Naive thymus-derived CD4-positive, alpha-beta T cell (primary cell): ENCODE measurements at regions of chr7 and their contacts with region 1.

Region 1: DNA sequence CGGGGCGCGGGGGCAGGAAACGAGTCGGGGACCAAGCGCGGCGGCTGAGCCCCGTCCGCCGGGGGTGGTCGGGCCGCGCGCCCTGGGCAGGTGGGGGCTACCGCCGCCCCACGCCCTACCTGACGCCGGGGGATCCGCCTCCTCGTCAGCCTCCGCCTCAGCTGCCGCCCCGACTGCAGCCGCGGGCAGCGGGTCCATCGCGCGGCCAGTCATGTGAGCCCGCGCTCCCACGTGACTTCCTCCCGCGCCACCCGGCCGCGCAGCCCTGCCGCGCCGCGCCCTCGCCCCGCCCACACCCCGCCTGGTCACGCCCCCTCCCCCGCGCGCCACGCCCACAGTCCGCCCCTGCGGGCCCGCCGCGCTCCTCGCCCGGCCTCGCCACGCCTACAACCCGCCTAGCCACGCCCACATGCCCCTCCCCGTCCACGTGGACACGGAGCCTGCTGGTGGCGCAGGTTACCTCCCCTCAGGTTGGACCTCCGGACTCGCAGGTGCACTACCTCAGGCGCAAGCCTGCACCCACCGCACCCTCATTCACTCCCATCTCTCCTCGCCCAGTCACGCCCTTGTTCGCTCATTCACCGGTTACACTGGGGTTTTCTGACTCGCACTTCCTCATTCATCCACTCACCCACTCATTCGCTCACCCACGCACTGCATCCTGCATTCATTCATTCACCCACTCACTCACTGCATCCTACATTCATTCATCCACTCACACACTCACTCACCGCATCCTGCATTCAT is at the start of gene SNX8:
- DNase-seq: peak; percentile 91 to 99 (median 94)
- ATAC-seq: peak; percentile 98
- H3K4me3 ChIP-seq: peak within 1 kb of the TSS; percentile 59
- H3K4me3 Mint-ChIP-seq: peak within 1 kb of the TSS in 7 of 10 donors; percentile 87 to 96 (median 93)
- H3K27ac ChIP-seq: peak within 1 kb of the TSS; percentile 60
- H3K27ac Mint-ChIP-seq: peak within 1 kb of the TSS; percentile 62 to 89 (median 88)
- H3K4me1 ChIP-seq: no peaks in the 10 kb centered on the region
- H3K4me1 Mint-ChIP-seq: peaks cover 0 to 19% (median 15%) of the 10 kb centered on the region in 7 donors
- H3K27me3 ChIP-seq: no peaks in the 10 kb centered on the region
- H3K27me3 Mint-ChIP-seq: no peaks in the 10 kb centered on the region
- total RNA-seq, gene SNX8: 4.7 to 31.5 (median 9.4) TPM

Region 2: DNA sequence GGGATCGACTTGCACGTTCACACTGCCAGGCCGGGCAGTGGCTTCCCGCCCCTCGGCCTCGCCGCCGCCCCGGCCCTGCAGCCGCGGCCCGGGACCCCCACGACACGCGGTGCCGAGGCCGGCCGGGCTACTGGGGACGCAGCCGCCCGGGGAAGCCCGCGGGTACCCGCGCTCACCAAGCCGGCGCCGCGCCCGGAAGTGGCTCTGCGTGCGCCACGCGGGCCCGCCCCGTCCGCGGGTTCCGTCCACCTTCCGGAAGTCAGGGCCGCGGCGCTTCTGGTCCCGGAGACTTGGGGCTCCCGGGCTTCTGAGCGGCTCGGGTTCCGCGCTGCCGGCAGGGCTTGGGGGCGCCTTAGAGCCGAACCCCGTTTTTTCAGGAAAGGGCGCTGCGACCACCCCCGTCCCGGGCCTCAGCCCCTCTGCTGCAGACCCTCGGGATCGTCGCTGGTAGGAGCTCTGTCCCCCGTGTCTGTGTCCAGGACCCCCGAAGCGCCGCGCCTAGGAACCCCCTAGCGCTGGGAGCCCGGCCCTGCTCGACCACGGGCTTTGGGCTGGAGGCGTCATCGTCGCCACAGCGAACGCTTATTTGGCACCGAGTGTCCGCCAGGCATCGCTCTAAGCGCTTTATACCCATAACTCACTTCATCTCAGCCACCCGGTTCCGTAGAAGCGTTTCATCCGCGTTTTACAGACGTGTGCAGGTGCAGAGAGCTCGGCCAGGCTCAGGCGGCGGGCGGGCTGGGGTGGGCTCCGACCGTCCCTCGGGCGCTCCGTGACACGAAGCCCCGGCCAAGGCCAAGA is 744.3 kb before region 1 on chr7 and contains the start of gene PSMG3:
- CTCF ChIA-PET with region 1: no interaction called
- POLR2A ChIA-PET with region 1: no interaction called
- intact Hi-C with region 1: loop called in 1 of 2 experiments (anchors 1 kb)
- DNase-seq: peak; percentile 72 to 91 (median 84)
- ATAC-seq: peak; percentile 94
- H3K4me3 ChIP-seq: peak within 1 kb of the TSS; percentile 90
- H3K4me3 Mint-ChIP-seq: peak within 1 kb of the TSS; percentile 77 to 91 (median 86)
- H3K27ac ChIP-seq: peak within 1 kb of the TSS; percentile 95
- H3K27ac Mint-ChIP-seq: peak within 1 kb of the TSS; percentile 81 to 93 (median 88)
- H3K4me1 ChIP-seq: peaks cover 3 to 16% of the 10 kb centered on the region in 2 donors
- H3K4me1 Mint-ChIP-seq: peaks cover 14 to 36% (median 26%) of the 10 kb centered on the region in 7 donors
- H3K27me3 ChIP-seq: no peaks in the 10 kb centered on the region
- H3K27me3 Mint-ChIP-seq: no peaks in the 10 kb centered on the region
- total RNA-seq, gene PSMG3: 12.1 to 31.8 (median 23.2) TPM

Region 3: GRCh38 chr7:2232766-2233520 is 81.4 kb before region 1 on chr7 and contains the start of gene MAD1L1:
- CTCF ChIA-PET with region 1: no interaction called
- POLR2A ChIA-PET with region 1: interaction called, 3 read pairs
- intact Hi-C with region 1: loop called in 1 of 2 experiments (anchors 1 kb)
- DNase-seq: peak; percentile 75 to 90 (median 88)
- ATAC-seq: peak; percentile 90
- H3K4me3 ChIP-seq: peak within 1 kb of the TSS; percentile 99
- H3K4me3 Mint-ChIP-seq: peak within 1 kb of the TSS; percentile 88 to 98 (median 95)
- H3K27ac ChIP-seq: peak within 1 kb of the TSS; percentile 80
- H3K27ac Mint-ChIP-seq: peak within 1 kb of the TSS; percentile 66 to 91 (median 86)
- H3K4me1 ChIP-seq: peaks cover 13 to 27% of the 10 kb centered on the region in 2 donors
- H3K4me1 Mint-ChIP-seq: peaks cover 16 to 58% (median 31%) of the 10 kb centered on the region in 7 donors
- H3K27me3 ChIP-seq: no peaks in the 10 kb centered on the region
- H3K27me3 Mint-ChIP-seq: no peaks in the 10 kb centered on the region
- total RNA-seq, gene MAD1L1: 112 to 141 (median 125) TPM

Region 4: DNA sequence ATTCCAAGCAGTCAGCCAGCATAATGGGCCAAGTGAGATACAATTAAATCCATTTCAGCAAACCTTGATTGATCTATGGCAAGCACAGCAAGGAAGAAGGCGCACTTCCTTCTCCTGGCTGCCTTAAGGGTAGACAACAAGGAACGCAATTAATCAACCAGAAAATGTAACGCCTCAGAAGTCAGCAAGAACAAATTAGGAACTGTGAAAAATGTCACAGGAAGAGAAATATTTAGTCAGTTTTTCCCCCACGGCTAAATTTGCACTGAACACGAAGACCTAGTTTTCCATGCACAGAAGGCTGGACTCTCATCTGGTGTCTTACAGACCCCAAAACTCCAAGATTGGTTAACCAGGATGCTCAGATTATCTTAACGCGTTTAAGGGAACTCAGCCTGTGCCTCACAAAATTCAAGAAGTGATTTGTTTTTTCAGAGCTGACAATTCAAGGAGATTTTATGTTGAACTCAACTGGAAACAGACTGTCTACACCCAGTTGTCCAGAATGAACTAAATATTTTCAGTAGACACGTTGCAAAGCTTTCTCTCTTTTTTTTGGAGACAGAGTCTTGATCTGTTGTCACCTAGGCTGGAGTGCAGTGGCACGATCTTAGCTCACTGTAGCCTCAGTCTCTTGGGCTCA is 14.4 kb before region 1 on chr7:
- CTCF ChIA-PET with region 1: no interaction called
- POLR2A ChIA-PET with region 1: no interaction called
- intact Hi-C with region 1: no loop called
- DNase-seq: no peak
- ATAC-seq: peak; percentile 46
- H3K4me3 ChIP-seq: no peak overlapping the region
- H3K4me3 Mint-ChIP-seq: no peak overlapping the region
- H3K27ac ChIP-seq: no peak overlapping the region
- H3K27ac Mint-ChIP-seq: no peak overlapping the region
- H3K4me1 ChIP-seq: no peaks in the 10 kb centered on the region
- H3K4me1 Mint-ChIP-seq: peaks cover 0 to 11% (median 0%) of the 10 kb centered on the region in 7 donors
- H3K27me3 ChIP-seq: no peaks in the 10 kb centered on the region
- H3K27me3 Mint-ChIP-seq: no peaks in the 10 kb centered on the region

Region 5: DNA sequence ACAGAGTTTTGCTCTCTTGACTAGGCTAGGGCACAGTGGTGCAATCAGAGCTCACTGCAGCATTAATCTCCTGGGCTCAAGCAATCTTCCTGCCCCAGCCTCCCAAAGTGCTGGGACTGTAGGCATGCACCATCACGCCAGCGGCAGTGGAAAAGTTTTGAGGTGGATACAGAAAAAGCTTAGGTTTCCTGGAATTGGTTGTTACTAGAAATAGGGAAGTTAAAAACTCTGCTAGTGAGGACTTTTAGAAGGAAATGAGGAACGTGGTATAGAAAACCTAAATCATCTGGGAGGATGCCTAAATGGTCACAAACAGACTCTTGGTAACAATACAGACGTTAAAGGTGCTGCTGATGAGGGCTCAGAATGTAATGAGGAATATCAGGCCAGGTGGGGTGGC is 10.8 kb after region 1 on chr7:
- CTCF ChIA-PET with region 1: no interaction called
- POLR2A ChIA-PET with region 1: no interaction called
- intact Hi-C with region 1: no loop called
- DNase-seq: no peak
- ATAC-seq: no peak
- H3K4me3 ChIP-seq: no peak overlapping the region
- H3K4me3 Mint-ChIP-seq: no peak overlapping the region
- H3K27ac ChIP-seq: no peak overlapping the region
- H3K27ac Mint-ChIP-seq: no peak overlapping the region
- H3K4me1 ChIP-seq: no peaks in the 10 kb centered on the region
- H3K4me1 Mint-ChIP-seq: peaks cover 0 to 4% (median 0%) of the 10 kb centered on the region in 7 donors
- H3K27me3 ChIP-seq: no peaks in the 10 kb centered on the region
- H3K27me3 Mint-ChIP-seq: peaks cover 0 to 3% (median 0%) of the 10 kb centered on the region in 5 donors

Region 6: GRCh38 chr7:2354186-2354938 is 40.0 kb after region 1 on chr7 and contains the start of gene EIF3B:
- CTCF ChIA-PET with region 1: no interaction called
- POLR2A ChIA-PET with region 1: no interaction called
- intact Hi-C with region 1: loop called (anchors 1 kb)
- DNase-seq: peak; percentile 87 to 97 (median 94)
- ATAC-seq: peak; percentile 90
- H3K4me3 ChIP-seq: peak within 1 kb of the TSS; percentile 89
- H3K4me3 Mint-ChIP-seq: peak within 1 kb of the TSS; percentile 90 to 100 (median 94)
- H3K27ac ChIP-seq: peak within 1 kb of the TSS; percentile 97
- H3K27ac Mint-ChIP-seq: peak within 1 kb of the TSS; percentile 98 to 100 (median 100)
- H3K4me1 ChIP-seq: peaks cover 25 to 38% of the 10 kb centered on the region in 2 donors
- H3K4me1 Mint-ChIP-seq: peaks cover 16 to 48% (median 31%) of the 10 kb centered on the region in 7 donors
- H3K27me3 ChIP-seq: no peaks in the 10 kb centered on the region
- H3K27me3 Mint-ChIP-seq: peaks cover 0 to 3% (median 0%) of the 10 kb centered on the region in 5 donors
- total RNA-seq, gene EIF3B: 127 to 189 (median 158) TPM

Region 7: DNA sequence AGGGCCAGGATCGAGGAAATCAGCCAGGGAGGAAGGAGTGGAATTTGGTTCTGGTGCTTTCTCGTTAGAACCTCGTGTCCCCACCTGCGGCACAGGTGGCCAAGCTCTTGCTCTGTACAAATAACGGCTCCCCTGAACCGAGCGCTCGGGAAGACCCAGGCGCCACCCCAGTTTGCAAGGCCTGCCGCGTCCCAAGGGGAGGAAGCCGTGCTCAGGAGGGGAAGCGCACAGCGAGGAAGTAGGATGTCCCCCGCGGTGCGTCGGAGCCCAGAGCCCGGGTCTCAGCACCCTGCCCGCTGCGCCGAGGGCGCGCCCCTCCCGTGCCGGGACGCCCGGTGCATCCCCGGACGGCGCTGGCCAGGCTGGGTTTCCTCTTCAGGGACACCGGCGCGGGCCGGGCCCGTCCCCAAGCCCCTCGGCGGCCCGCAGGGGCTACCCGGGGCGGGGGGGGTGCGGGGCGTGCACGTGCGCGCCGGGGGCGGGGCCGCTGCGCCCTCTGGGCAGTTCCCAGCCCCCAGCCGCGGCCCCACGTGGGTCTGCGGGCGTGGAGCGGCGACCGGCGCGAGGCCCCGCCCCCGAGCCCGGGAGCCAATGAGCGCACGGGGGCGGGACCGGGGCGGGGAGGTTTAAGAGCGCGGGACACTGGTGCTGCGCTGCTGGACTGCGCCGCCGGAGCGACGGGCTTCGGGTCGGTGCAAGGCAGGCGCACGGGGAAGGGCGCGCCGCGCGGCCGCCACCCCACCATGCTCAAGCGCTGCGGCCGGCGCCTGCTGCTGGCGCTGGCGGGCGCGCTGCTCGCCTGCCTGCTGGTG is 204.9 kb after region 1 on chr7 and contains the start of gene LFNG:
- CTCF ChIA-PET with region 1: no interaction called
- POLR2A ChIA-PET with region 1: no interaction called
- intact Hi-C with region 1: loop called in 1 of 2 experiments (anchors 2 kb)
- DNase-seq: peak; percentile 64 to 93 (median 77)
- ATAC-seq: peak; percentile 89
- H3K4me3 ChIP-seq: peak within 1 kb of the TSS; percentile 94
- H3K4me3 Mint-ChIP-seq: peak within 1 kb of the TSS; percentile 94 to 99 (median 96)
- H3K27ac ChIP-seq: peak within 1 kb of the TSS; percentile 78
- H3K27ac Mint-ChIP-seq: peak within 1 kb of the TSS; percentile 80 to 92 (median 88)
- H3K4me1 ChIP-seq: peaks cover 20 to 25% of the 10 kb centered on the region in 2 donors
- H3K4me1 Mint-ChIP-seq: peaks cover 14 to 33% (median 30%) of the 10 kb centered on the region in 7 donors
- H3K27me3 ChIP-seq: no peaks in the 10 kb centered on the region
- H3K27me3 Mint-ChIP-seq: peaks cover 0 to 11% (median 0%) of the 10 kb centered on the region in 5 donors
- total RNA-seq, gene LFNG: 114 to 246 (median 151) TPM